ENCODE measurements at regions of chr5 and their contacts with region 1.

Region 1: DNA sequence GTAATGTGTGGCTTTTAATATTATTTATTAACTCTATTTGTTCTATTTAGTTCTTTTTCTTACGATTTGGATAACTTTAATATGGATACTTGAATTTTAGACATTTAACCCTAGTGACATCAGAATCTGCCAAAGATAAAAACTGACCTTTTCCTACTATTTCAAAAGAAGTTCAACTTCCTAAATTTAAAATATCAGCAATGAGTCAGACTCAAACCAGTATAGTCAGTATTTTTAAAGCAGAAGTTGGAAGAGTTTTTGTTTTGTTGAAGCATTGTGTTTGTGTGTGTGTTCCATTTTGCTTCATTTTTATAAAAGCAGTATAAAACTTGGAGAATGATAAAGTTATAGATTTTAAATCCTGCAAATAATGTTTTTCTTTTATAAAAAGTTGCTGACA is 251.8 kb upstream of the RASA1 start:
- DNase-seq: no peak
- H3K4me3 ChIP-seq: no peak overlapping the region
- H3K27ac ChIP-seq: no peak overlapping the region
- H3K4me1 ChIP-seq: peaks cover 14% of the 10 kb centered on the region
- CTCF ChIP-seq: no peak

Region 2: GRCh38 chr5:86786955-86787354 is 228.9 kb before region 1 on chr5:
- CTCF ChIA-PET with region 1: no interaction called
- POLR2A ChIA-PET with region 1: no interaction called
- intact Hi-C with region 1: no loop called
- DNase-seq: no peak
- H3K4me3 ChIP-seq: no peak overlapping the region
- H3K27ac ChIP-seq: no peak overlapping the region
- H3K4me1 ChIP-seq: no peaks in the 10 kb centered on the region
- CTCF ChIP-seq: no peak

Region 3: GRCh38 chr5:86864051-86864450 is 151.8 kb before region 1 on chr5:
- CTCF ChIA-PET with region 1: no interaction called
- POLR2A ChIA-PET with region 1: no interaction called
- intact Hi-C with region 1: no loop called
- DNase-seq: no peak
- H3K4me3 ChIP-seq: no peak overlapping the region
- H3K27ac ChIP-seq: no peak overlapping the region
- H3K4me1 ChIP-seq: no peaks in the 10 kb centered on the region
- CTCF ChIP-seq: no peak

Region 4: GRCh38 chr5:86880785-86881492 is 135.0 kb before region 1 on chr5:
- CTCF ChIA-PET with region 1: no interaction called
- POLR2A ChIA-PET with region 1: no interaction called
- intact Hi-C with region 1: loop called (anchors 2 kb)
- DNase-seq: peak; percentile 70
- H3K4me3 ChIP-seq: no peak overlapping the region
- H3K27ac ChIP-seq: no peak overlapping the region
- H3K4me1 ChIP-seq: no peaks in the 10 kb centered on the region
- CTCF ChIP-seq: peak; percentile 83

Measured in OCI-LY7 (cell line).